B cell (primary cell): ENCODE measurements at regions of chr14 and their contacts with region 1.

Region 1: DNA sequence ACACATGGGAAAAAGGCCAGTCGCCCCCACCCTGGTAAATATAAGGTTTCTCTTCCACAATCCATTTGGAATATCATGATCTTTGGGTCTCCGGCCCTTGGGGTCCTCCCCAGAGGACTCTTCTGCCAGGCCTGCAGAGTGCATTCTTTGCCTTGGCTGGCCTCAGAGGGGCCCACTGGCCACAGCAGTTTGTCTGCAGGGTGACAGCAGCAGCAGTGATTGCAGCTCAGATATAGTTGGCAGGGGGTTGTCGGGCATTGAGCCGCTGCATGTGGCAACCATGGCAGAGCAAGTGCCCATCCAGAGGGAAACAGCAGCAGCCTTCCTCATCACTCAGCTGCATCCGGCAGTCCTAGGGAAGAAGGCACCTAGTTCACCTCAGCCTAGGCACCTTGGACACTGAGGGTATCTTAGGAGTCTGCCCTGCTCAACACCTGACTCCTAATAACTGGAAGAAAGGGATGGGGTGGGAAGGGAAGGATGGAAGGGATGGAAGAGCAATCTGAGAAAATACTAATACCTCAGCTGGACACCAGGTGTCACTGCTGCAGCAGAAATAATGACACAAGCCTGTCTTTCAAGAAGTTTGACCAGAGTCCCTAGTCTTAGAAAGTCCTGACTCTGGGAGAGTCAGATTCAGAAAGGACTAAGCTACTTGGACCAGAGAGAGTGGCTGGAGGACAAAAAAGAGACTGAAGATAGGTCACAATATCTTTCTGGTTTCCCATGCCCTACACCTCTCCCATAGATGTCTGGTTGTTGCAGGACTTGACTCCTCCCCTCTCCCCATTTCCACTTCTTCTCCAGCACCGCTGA is 8.9 kb downstream of the AJUBA start:
- DNase-seq: peak; percentile 69
- ATAC-seq: peak; percentile 54
- H3K4me3 ChIP-seq: no peak overlapping the region
- H3K4me3 Mint-ChIP-seq: no peak overlapping the region
- H3K27ac ChIP-seq: no peak overlapping the region
- H3K27ac Mint-ChIP-seq: no peak overlapping the region
- H3K4me1 ChIP-seq: peaks cover 0 to 5% of the 10 kb centered on the region in 2 donors
- H3K4me1 Mint-ChIP-seq: peaks cover 4% of the 10 kb centered on the region
- H3K27me3 ChIP-seq: peaks cover 0 to 5% (median 2%) of the 10 kb centered on the region in 4 experiments
- H3K27me3 Mint-ChIP-seq: peaks cover 15% of the 10 kb centered on the region
- CTCF ChIP-seq: peak; percentile 79

Region 2: GRCh38 chr14:22962061-22962676 is 11.3 kb before region 1 on chr14:
- CTCF ChIA-PET with region 1: interaction called, 38 read pairs
- POLR2A ChIA-PET with region 1: interaction called, 3 read pairs
- intact Hi-C with region 1: no loop called
- DNase-seq: no peak
- ATAC-seq: no peak
- H3K4me3 ChIP-seq: no peak overlapping the region
- H3K4me3 Mint-ChIP-seq: no peak overlapping the region
- H3K27ac ChIP-seq: no peak overlapping the region
- H3K27ac Mint-ChIP-seq: no peak overlapping the region
- H3K4me1 ChIP-seq: peaks cover 3 to 5% of the 10 kb centered on the region in 2 donors
- H3K4me1 Mint-ChIP-seq: peaks cover 4% of the 10 kb centered on the region
- H3K27me3 ChIP-seq: no peaks in the 10 kb centered on the region
- H3K27me3 Mint-ChIP-seq: no peaks in the 10 kb centered on the region
- CTCF ChIP-seq: no peak

Region 3: DNA sequence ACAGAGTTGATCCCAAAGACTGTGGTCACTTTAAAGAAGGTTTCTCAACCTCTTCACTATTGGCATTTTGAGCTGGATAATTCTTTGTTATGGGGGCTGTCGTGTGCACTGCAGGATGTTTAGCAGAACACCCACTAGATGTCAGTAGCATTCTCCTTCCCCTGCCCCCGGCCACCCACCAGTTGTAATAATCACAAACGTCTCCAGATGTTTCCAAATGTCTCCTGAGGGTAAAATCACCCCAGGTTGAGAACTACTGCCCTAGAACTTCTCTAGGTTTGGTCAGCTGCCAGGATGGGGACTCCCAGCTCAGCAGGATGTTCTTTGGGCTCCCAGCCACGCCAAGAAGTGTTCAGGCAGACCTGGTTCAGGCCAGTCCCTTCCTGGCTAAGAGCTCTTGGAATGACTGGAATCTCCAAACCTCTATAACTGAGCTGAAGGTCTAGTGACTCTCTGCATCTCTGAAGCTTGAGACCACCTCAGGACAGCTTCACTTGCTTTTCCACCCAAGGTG is 21.4 kb after region 1 on chr14:
- CTCF ChIA-PET with region 1: interaction called, 27 read pairs
- POLR2A ChIA-PET with region 1: no interaction called
- intact Hi-C with region 1: no loop called
- DNase-seq: peak; percentile 44
- ATAC-seq: peak; percentile 58
- H3K4me3 ChIP-seq: no peak overlapping the region
- H3K4me3 Mint-ChIP-seq: no peak overlapping the region
- H3K27ac ChIP-seq: no peak overlapping the region
- H3K27ac Mint-ChIP-seq: no peak overlapping the region
- H3K4me1 ChIP-seq: no peaks in the 10 kb centered on the region
- H3K4me1 Mint-ChIP-seq: peaks cover 2% of the 10 kb centered on the region
- H3K27me3 ChIP-seq: no peaks in the 10 kb centered on the region
- H3K27me3 Mint-ChIP-seq: no peaks in the 10 kb centered on the region
- CTCF ChIP-seq: peak; percentile 49